ENCODE measurements at regions of chr7 and their contacts with region 1.

Region 1: DNA sequence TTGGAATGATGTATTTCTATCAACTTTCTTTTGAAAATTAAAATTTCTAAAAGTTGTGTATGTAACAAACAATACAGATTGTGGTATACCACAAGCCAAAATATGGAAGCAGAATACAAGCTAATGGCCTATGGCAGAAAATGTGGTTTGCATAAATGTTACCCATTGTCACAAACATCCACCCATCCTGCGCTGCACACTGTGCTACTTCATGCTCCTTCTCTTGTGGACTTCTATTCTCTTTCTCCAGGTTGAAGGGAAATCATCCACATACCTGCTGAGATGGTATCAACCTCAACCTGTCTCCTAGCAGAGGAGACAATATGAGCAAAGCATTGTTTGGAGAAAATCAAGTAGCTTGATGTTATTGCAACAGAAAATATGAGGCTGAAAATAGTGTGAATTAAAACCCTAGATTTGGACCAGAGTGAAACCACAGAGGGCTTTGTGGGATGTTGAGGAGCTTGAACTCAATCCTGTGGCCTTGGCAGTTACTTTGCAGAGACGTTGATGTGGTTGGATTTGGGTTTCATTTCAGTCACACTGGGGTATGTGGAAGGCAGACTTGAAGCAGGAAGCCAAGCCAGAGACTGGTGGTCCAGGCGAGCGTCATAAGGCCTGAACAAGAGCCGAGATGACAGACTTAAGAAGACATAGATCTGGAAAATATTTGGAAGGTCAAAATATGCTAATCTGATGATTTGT is 63.8 kb downstream of the ICA1 start:
- DNase-seq: peak; percentile 81
- ATAC-seq: peak; percentile 92
- H3K4me3 Mint-ChIP-seq: no peak overlapping the region
- H3K27ac Mint-ChIP-seq: no peak overlapping the region
- H3K4me1 Mint-ChIP-seq: peaks cover 25% of the 10 kb centered on the region
- H3K27me3 Mint-ChIP-seq: peaks cover 4% of the 10 kb centered on the region
- CTCF ChIP-seq: no peak

Region 2: DNA sequence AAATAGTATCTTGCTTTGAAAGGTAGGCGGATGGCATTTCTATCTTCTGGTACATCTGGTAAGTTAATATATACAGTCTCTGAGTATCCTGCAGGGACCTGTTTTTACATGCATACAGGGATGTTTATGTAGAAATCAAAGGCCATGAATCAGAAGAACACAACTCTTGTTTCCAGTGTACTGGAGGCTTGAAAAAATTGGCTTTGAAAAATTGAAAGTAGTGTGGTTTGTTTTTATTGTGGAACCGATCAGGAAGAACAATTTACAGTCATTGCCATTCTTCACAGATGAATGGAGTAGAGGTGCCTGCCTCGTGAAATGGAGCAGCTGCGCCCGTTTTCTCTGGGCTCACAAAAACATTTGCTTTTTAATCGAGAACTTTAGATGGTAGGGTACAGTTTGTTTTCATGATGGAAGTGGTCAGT is 425.7 kb before region 1 on chr7:
- CTCF ChIA-PET with region 1: no interaction called
- POLR2A ChIA-PET with region 1: no interaction called
- intact Hi-C with region 1: loop called (anchors 5 kb)
- DNase-seq: peak; percentile 11
- ATAC-seq: peak; percentile 72
- H3K4me3 Mint-ChIP-seq: peak overlapping the region; percentile 47
- H3K27ac Mint-ChIP-seq: peak overlapping the region; percentile 8
- H3K4me1 Mint-ChIP-seq: peaks cover 22% of the 10 kb centered on the region
- H3K27me3 Mint-ChIP-seq: no peaks in the 10 kb centered on the region
- CTCF ChIP-seq: no peak

Measured in activated CD8-positive, alpha-beta T cell treated with anti-CD3 and anti-CD28 coated beads for 36 hours (primary cell).